Cardiac septum (tissue), 1 donor: ENCODE measurements at regions of chr3 and their contacts with region 1.

Region 1: GRCh38 chr3:16550676-16551341 is 37.3 kb upstream of the RFTN1 start:
- DNase-seq: no peak

Region 2: GRCh38 chr3:16048435-16049318 is 502.1 kb before region 1 on chr3:
- intact Hi-C with region 1: loop called (anchors 5 kb)
- DNase-seq: no peak

Region 3: DNA sequence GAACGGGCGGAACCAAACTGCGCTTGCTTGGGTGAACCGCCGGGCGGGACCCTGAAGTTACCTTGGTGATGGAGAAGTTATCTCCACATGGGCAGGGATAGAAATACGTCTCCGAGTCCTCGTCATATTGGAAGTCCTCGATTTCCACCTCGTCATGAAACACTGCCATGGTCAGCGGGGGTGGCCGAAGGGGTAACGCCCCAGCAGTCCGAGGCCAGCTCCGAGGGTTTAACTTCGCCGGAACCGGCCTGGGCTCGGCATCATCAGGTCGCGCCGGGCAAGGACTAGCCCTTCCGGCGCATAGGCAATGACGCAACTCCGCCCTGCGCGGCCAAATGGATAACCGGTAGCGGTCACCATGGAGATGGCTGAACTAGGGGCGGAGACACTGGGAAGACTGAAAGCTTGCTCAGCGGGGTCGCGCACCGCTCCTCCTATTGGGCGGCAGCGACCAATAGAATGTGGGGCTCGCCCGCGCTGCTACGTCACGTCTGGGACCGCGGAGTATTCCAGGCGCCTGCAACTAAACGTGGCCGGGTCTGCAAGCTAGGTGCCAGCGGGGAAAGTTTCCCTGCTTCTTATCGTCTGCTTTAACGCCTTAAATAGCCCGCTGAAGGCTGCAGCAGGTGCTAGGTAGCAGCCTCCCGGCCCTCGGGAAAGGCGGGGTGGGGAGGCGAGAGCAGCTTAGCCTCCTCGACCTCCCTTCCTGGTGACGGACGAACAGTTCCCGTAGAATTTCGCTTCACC is 285.9 kb before region 1 on chr3 and contains the starts of genes DPH3 and OXNAD1:
- intact Hi-C with region 1: loop called (anchors 5 kb)
- DNase-seq: peak; percentile 99
- total RNA-seq, gene DPH3: 23.1 TPM
- total RNA-seq, gene OXNAD1: 15.1 TPM

Region 4: GRCh38 chr3:16349986-16350596 is 200.7 kb before region 1 on chr3:
- intact Hi-C with region 1: no loop called
- DNase-seq: no peak

Region 5: DNA sequence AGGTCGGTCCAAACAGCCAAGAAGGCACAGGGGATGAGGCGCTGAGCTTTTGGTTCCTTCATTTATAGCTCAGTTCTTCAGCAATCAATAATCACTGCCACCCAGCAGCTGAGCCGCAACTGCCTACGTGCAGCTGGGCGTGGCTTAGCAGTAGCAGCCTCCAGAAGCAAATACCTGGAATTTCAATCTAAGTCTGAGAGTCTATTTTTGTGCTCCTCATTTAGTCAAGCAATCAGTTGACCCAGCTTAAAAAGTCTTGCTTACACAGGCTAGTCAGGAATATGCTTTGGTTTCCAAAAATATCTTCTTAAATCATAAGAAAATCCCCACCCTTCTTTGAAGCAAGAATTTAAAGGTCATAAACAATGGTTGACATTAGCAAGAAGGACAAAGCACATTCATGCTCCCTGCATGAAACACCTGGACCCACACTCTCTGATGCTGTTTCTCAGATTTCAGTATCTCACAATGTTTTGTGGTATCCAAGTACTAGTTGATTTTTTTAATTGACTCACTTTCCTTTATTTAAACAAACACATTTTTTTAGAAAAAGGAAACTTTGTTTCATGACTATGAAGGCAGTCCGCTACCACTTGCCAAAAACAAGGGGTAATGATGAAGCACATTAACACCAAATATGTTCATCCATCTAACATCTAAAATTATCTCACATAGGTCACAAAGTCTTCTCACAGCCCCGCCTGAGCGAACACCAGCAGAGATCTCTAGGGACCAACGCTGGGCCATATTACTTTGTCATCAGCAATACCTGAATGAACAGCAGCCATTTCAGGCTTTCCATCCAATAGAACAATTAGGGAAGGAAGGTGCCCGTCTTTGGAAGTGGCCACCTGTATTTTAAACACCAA is 179.7 kb before region 1 on chr3:
- intact Hi-C with region 1: loop called (anchors 1 kb)
- DNase-seq: no peak

Region 6: DNA sequence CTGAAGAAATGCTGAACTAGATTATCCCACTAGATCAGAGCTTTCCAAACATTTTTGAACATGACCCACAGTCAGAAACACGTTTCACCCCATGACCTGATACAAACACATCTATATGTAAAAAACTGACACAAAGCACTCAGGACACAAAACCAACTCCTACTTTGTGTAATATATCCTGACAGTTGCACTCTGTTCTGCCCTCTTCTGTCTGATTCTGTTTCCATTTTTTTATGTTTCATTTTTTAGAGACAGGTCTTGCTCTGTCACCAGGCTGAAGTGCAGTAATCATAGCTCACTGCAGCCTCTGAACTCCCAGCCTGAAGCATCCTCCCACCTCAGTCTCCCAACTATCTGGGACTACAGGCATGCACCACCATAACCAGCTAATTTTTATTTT is 21.5 kb before region 1 on chr3:
- intact Hi-C with region 1: no loop called
- DNase-seq: no peak